AG04449 (cell line): ENCODE measurements at regions of chr11 and their contacts with region 1.

Region 1: DNA sequence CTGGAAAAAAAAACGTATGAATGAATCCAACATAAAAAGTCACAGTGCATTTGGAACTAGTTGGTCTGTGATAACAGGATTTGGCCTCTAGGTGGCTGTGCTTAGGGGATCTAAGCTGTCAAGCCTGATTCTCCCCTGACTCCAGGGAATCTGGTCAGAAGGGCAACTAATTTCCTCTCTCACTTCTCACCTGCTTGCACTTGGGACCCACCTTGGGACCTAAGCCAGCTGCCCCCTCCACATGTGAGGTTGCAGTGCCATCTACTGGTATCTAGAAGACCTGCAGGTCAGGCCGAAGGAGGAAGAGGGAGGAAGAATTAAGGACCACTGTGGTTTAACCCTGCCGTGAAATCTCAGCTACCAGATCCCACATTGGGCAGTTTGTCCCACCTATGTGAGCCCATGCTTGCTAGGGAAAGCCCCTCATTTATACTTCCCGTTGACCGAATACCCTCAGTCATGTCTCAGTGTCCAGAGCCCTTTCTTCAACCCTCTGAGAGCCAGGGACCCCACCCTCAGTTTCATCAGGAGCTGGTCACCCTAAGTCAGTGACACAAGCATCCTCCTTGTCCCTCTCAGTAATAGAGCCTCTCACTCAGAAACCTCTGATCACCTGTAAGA is 33.2 kb upstream of the CAVIN3 start:
- DNase-seq: no peak
- H3K4me3 ChIP-seq: no peak overlapping the region
- CTCF ChIP-seq: peak; percentile 86

Region 2: GRCh38 chr11:6022956-6023355 is 330.5 kb before region 1 on chr11:
- CTCF ChIA-PET with region 1: interaction called, 22 read pairs
- POLR2A ChIA-PET with region 1: no interaction called
- DNase-seq: peak; percentile 3
- H3K4me3 ChIP-seq: no peak overlapping the region
- CTCF ChIP-seq: peak; percentile 10

Region 3: GRCh38 chr11:6234387-6235107 is 118.9 kb before region 1 on chr11 and contains the start of gene FHIP1B:
- CTCF ChIA-PET with region 1: interaction called, 10 read pairs
- POLR2A ChIA-PET with region 1: no interaction called
- DNase-seq: peak; percentile 98
- H3K4me3 ChIP-seq: peak within 1 kb of the TSS; percentile 98
- CTCF ChIP-seq: no peak

Region 4: GRCh38 chr11:6298605-6299004 is 54.9 kb before region 1 on chr11:
- CTCF ChIA-PET with region 1: interaction called, 80 read pairs
- POLR2A ChIA-PET with region 1: no interaction called
- DNase-seq: no peak
- H3K4me3 ChIP-seq: no peak overlapping the region
- CTCF ChIP-seq: peak; percentile 81

Region 5: GRCh38 chr11:6307876-6308275 is 45.6 kb before region 1 on chr11:
- CTCF ChIA-PET with region 1: interaction called, 180 read pairs
- POLR2A ChIA-PET with region 1: no interaction called
- DNase-seq: no peak
- H3K4me3 ChIP-seq: no peak overlapping the region
- CTCF ChIP-seq: no peak

Region 6: GRCh38 chr11:6315811-6316425 is 37.6 kb before region 1 on chr11:
- CTCF ChIA-PET with region 1: interaction called, 180 read pairs
- POLR2A ChIA-PET with region 1: interaction called, 4 read pairs
- DNase-seq: no peak
- H3K4me3 ChIP-seq: no peak overlapping the region
- CTCF ChIP-seq: peak; percentile 89

Region 7: DNA sequence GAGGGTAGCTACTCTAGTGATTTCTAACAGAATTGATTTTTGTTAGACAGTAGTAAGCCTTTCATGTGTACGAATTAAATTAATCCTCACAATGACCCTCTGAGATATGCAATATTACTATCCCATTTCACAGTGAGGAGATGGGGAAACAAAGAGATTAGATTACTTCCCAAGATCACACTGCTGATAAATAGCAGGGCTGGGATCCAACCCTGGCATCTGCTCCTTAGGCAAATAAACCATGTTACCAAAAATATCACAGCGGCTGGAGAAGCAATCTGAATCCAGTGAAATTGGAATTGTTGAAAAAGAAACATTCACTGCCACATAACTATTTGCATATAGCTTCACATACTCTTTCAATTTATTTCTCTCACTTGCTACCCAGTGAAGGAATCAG is 20.4 kb before region 1 on chr11:
- CTCF ChIA-PET with region 1: interaction called, 31 read pairs
- POLR2A ChIA-PET with region 1: no interaction called
- DNase-seq: no peak
- H3K4me3 ChIP-seq: no peak overlapping the region
- CTCF ChIP-seq: no peak